Activated CD4-positive, alpha-beta T cell treated with anti-CD3 and anti-CD28 coated beads, Interleukin-2, amount 10 ng/mL, durations not matched to agents 24 days and 14 days (primary cell): ENCODE measurements at regions of chr2 and their contacts with region 1.

Region 1: DNA sequence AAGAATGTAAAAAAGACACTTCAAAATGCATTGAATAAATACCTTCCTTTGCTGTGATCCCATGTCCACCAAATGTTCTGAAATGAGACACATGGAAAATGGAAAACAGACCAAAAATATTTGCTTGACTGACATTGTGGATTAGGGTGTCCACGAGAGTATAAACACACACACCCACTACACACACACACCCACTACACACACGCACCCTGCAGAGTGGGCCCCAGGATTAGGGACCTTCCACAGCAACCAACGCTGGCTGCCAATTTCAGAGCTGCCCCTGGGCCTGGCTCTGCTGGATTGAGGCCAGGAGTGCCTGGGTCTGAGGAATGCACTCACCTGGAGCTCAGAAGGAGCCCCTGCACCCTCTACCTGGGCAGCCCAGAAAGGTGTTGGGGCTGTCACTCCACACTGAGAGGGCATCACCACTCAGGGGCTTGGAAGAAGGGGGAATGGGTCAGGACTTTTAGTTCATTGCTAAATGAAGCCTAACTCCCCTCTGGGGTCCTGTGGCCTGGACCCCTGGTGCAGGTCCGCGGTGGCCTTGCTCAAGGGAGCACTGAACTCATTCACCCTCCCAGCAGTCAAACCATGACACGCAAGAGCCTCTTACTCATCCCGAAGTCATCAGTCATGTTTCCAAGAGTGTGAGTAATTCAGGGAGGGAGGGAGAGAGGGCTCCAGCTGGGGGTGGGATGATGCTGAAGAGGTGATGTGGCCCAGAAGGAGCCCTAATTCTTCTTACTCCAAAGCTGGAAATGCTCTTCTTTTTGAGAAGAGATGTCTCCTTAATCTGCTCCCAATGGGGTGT is 50.2 kb upstream of the PLB1 start:
- DNase-seq: no peak
- H3K4me3 Mint-ChIP-seq: peak overlapping the region; percentile 47
- H3K27ac Mint-ChIP-seq: peak overlapping the region; percentile 85
- H3K4me1 Mint-ChIP-seq: peaks cover 64% of the 10 kb centered on the region
- H3K27me3 Mint-ChIP-seq: no peaks in the 10 kb centered on the region

Region 2: GRCh38 chr2:27954771-27955383 is 490.8 kb before region 1 on chr2:
- intact Hi-C with region 1: loop called (anchors 5 kb)
- DNase-seq: peak; percentile 76
- H3K4me3 Mint-ChIP-seq: peak overlapping the region; percentile 66
- H3K27ac Mint-ChIP-seq: peak overlapping the region; percentile 86
- H3K4me1 Mint-ChIP-seq: peaks cover 67% of the 10 kb centered on the region
- H3K27me3 Mint-ChIP-seq: no peaks in the 10 kb centered on the region

Region 3: DNA sequence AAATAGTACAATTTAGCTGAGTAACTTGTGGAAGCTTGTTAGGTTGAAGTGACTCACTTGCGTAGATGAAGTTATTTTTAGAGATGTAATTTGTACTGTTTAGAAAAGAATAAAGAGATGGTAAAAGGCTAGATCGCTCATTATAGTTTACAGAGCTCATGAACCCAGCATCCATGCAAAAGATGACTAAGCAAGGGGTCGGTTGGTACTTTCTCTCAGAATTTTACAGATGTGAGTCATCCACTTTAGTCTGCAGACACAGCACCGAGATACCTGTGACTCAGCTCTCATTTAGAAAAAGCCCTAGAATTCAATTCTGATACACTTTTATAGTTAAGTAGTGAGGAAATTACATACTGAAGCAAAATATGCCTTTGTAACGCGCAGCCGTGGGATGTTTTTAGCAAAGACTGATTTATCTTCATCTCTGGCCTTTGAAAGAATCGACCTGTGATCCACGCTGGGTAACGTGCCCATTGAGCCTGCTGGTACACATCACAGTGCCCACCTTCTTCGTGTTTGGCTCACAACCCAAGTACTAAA is 169.5 kb before region 1 on chr2:
- intact Hi-C with region 1: loop called (anchors 5 kb)
- DNase-seq: peak; percentile 66
- H3K4me3 Mint-ChIP-seq: no peak overlapping the region
- H3K27ac Mint-ChIP-seq: no peak overlapping the region
- H3K4me1 Mint-ChIP-seq: peaks cover 37% of the 10 kb centered on the region
- H3K27me3 Mint-ChIP-seq: no peaks in the 10 kb centered on the region

Region 4: DNA sequence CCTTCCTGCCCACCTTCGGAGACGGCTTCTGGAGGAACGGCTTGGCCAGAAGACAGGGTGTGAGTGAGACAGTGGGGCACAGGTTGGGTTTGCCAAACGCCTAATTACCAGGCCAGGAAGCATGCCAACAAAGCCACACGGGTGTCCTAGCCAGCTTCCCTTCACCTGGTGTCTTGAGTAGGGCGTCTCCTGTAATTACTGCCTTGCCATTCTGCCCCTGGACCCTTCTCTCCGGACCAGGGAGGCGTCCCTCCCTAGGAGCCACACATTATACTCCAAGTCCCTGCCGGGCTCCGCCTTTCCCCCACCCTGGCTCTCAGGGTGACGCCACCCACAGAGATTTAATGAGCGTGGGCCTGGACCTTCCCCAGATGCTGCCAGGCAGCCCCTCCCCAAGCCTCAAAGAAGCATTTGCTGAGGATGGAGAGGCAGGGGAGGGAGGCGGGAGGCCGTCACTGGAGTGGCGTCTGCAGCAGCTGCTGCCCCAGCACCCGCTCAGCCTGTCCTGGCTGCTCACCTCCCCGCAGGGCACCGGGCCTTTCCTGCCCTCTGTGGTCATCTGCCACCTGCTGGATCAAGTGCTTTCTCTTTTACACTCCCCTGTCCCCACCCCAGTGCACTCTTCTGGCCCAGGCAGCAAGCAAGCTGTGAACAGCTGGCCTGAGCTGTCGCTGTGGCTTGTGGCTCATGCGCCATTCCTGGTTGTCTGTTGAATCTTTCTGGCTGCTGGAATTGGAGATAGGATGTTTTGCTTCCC is 32.3 kb before region 1 on chr2:
- intact Hi-C with region 1: loop called (anchors 1 kb)
- DNase-seq: no peak
- H3K4me3 Mint-ChIP-seq: no peak overlapping the region
- H3K27ac Mint-ChIP-seq: peak overlapping the region; percentile 25
- H3K4me1 Mint-ChIP-seq: peaks cover 50% of the 10 kb centered on the region
- H3K27me3 Mint-ChIP-seq: no peaks in the 10 kb centered on the region

Region 5: GRCh38 chr2:28423856-28424605 is 21.6 kb before region 1 on chr2:
- intact Hi-C with region 1: loop called (anchors 1 kb)
- DNase-seq: peak; percentile 81
- H3K4me3 Mint-ChIP-seq: peak overlapping the region; percentile 62
- H3K27ac Mint-ChIP-seq: peak overlapping the region; percentile 82
- H3K4me1 Mint-ChIP-seq: peaks cover 39% of the 10 kb centered on the region
- H3K27me3 Mint-ChIP-seq: no peaks in the 10 kb centered on the region

Region 6: GRCh38 chr2:28465148-28465885 is 19.7 kb after region 1 on chr2:
- intact Hi-C with region 1: loop called (anchors 1 kb)
- DNase-seq: peak; percentile 70
- H3K4me3 Mint-ChIP-seq: peak overlapping the region; percentile 5
- H3K27ac Mint-ChIP-seq: peak overlapping the region; percentile 43
- H3K4me1 Mint-ChIP-seq: peaks cover 38% of the 10 kb centered on the region
- H3K27me3 Mint-ChIP-seq: peaks cover 12% of the 10 kb centered on the region

Region 7: GRCh38 chr2:28552045-28552823 is 106.6 kb after region 1 on chr2:
- intact Hi-C with region 1: no loop called
- DNase-seq: no peak
- H3K4me3 Mint-ChIP-seq: peak overlapping the region; percentile 1
- H3K27ac Mint-ChIP-seq: peak overlapping the region; percentile 31
- H3K4me1 Mint-ChIP-seq: peaks cover 17% of the 10 kb centered on the region
- H3K27me3 Mint-ChIP-seq: no peaks in the 10 kb centered on the region

Region 8: GRCh38 chr2:30072250-30072842 is 1626.7 kb after region 1 on chr2:
- intact Hi-C with region 1: no loop called
- DNase-seq: peak; percentile 89
- H3K4me3 Mint-ChIP-seq: no peak overlapping the region
- H3K27ac Mint-ChIP-seq: no peak overlapping the region
- H3K4me1 Mint-ChIP-seq: no peaks in the 10 kb centered on the region
- H3K27me3 Mint-ChIP-seq: peaks cover 17% of the 10 kb centered on the region